CD4-positive, alpha-beta memory T cell (primary cell): ENCODE measurements at regions of chr7 and their contacts with region 1.

Region 1: DNA sequence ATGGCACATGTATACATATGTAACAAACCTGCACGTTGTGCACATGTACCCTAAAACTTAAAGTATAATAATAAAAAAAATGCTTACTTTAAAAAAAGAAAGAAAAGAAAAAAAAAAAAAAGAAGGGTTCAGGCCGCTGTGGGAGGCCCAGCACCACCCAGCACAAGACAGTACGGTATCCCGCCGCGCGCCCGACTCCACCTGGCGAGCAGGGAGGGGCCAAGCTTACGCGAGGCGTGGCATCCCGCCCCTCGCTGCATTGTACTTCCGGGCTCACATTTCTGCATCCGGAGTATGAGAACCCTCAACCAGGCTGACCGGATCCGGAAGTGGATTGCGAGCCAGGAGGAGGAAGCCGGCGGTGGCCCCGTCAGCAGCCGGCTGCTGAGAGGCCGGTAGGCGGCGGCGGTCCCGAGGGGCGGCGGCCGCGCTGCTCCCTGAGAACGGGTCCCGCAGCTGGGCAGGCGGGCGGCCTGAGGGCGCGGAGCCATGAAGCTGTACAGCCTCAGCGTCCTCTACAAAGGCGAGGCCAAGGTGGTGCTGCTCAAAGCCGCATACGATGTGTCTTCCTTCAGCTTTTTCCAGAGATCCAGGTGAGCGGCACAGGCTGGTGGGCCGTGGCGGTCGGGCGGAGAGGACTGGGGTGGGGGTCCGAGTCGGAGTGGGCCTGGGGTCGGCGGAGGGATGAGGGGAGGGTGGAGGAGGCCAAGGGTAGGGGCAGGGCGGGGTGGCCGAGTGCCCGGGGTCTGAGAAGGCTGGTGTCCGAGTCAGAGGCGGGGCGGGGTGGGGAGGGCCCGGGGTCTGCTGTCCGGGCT is at the start of gene YKT6:
- DNase-seq: peak; percentile 91 to 96 (median 93)
- H3K4me3 ChIP-seq: peak within 1 kb of the TSS; percentile 12 to 84
- H3K4me3 Mint-ChIP-seq: peak within 1 kb of the TSS; percentile 77 to 90 (median 85)
- H3K27ac ChIP-seq: peak within 1 kb of the TSS; percentile 71
- H3K27ac Mint-ChIP-seq: peak within 1 kb of the TSS; percentile 49 to 88 (median 70)
- H3K4me1 ChIP-seq: peaks cover 17% of the 10 kb centered on the region
- H3K4me1 Mint-ChIP-seq: peaks cover 25 to 40% (median 35%) of the 10 kb centered on the region in 4 donors
- H3K27me3 ChIP-seq: no peaks in the 10 kb centered on the region
- H3K27me3 Mint-ChIP-seq: peaks cover 8 to 9% of the 10 kb centered on the region in 2 donors
- total RNA-seq, gene YKT6: 62.7 to 63.2 TPM

Region 2: GRCh38 chr7:44072364-44073231 is 128.3 kb before region 1 on chr7:
- CTCF ChIA-PET with region 1: no interaction called
- POLR2A ChIA-PET with region 1: interaction called, 5 read pairs
- intact Hi-C with region 1: loop called (anchors 1 kb)
- DNase-seq: peak in 2 of 5 donors; percentile 25 to 35
- H3K4me3 ChIP-seq: no peak overlapping the region
- H3K4me3 Mint-ChIP-seq: no peak overlapping the region
- H3K27ac ChIP-seq: no peak overlapping the region
- H3K27ac Mint-ChIP-seq: peak overlapping the region; percentile 7 to 71 (median 48)
- H3K4me1 ChIP-seq: no peaks in the 10 kb centered on the region
- H3K4me1 Mint-ChIP-seq: peaks cover 4 to 20% (median 11%) of the 10 kb centered on the region in 4 donors
- H3K27me3 ChIP-seq: no peaks in the 10 kb centered on the region
- H3K27me3 Mint-ChIP-seq: no peaks in the 10 kb centered on the region

Region 3: GRCh38 chr7:44145969-44146911 is 54.6 kb before region 1 on chr7:
- CTCF ChIA-PET with region 1: no interaction called
- POLR2A ChIA-PET with region 1: no interaction called
- intact Hi-C with region 1: loop called (anchors 1 kb)
- DNase-seq: peak; percentile 43 to 63 (median 48)
- H3K4me3 ChIP-seq: peak overlapping the region in 1 of 2 donors; percentile 51
- H3K4me3 Mint-ChIP-seq: peak overlapping the region; percentile 59 to 84 (median 77)
- H3K27ac ChIP-seq: peak overlapping the region; percentile 15
- H3K27ac Mint-ChIP-seq: peak overlapping the region in 3 of 7 donors; percentile 48 to 90 (median 78)
- H3K4me1 ChIP-seq: peaks cover 8% of the 10 kb centered on the region
- H3K4me1 Mint-ChIP-seq: peaks cover 1 to 14% (median 5%) of the 10 kb centered on the region in 4 donors
- H3K27me3 ChIP-seq: no peaks in the 10 kb centered on the region
- H3K27me3 Mint-ChIP-seq: peaks cover 2% of the 10 kb centered on the region in 2 donors